Prostate gland (tissue), 2 donors: ENCODE measurements at regions of chr3 and their contacts with region 1.

Region 1: DNA sequence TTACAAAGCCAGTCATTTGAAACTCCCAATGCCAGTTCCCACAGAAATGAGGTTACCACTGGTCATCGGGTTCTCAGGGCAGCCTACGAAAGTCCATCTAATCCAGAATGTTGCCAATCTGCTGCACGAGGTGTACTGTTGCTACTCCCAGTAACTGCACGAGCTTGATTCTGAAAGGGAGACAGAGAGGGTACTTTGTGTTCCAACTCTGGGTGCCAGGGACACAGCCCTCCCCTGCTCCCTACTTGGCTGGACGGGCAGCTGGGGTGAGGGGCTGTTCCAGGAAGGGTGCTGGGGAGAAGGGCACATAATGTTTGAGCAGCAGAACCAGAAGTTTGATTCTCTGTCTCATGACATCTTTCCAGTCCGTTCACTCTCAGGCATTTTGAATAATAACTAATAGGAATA is 27.1 kb upstream of the OSBPL11 start:
- DNase-seq: peak; percentile 17
- H3K4me3 ChIP-seq: no peak overlapping the region
- H3K27ac ChIP-seq: peak overlapping the region in 1 of 2 donors; percentile 10
- H3K4me1 ChIP-seq: peaks cover 5% of the 10 kb centered on the region
- H3K27me3 ChIP-seq: no peaks in the 10 kb centered on the region
- CTCF ChIP-seq: no peak
- POLR2A ChIP-seq: no peak

Region 2: GRCh38 chr3:125594581-125595011 is 27.8 kb before region 1 on chr3:
- intact Hi-C with region 1: loop called (anchors 2 kb)
- DNase-seq: peak; percentile 10
- H3K4me3 ChIP-seq: peak overlapping the region; percentile 84 to 89
- H3K27ac ChIP-seq: peak overlapping the region; percentile 93 to 94
- H3K4me1 ChIP-seq: no peaks in the 10 kb centered on the region
- H3K27me3 ChIP-seq: no peaks in the 10 kb centered on the region
- CTCF ChIP-seq: no peak
- POLR2A ChIP-seq: no peak